ENCODE measurements at regions of chr12 and their contacts with region 1.

Region 1: DNA sequence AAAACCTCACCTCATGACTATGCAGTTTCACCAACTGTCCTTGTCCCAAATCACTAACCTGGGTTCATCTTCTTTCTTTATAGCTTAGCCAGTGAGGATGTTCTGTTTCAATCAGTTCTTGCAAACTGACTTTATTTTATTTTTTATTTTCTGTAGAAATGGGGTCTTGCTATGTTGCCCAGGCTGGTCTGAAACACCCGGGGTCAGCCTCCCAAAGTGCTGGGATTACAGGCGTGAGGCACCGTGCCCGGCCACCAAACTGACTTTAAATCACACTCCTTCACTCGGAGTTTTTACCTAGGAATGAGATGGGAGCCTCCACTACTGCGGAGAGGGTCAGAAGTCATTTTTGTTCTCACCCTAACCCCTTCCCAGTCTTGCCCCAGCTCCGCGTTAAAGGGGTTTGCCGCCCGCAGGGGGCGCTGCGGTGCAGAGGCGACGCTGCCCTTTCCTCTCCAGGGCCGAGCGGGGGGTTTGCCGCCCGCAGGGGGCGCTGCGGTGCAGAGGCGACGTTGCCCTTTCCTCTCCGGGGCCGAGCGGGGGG is 7.0 kb upstream of the B4GALNT3 start:
- DNase-seq: no peak

Region 2: GRCh38 chr12:503111-503761 is 50.5 kb after region 1 on chr12:
- intact Hi-C with region 1: loop called (anchors 2 kb)
- DNase-seq: peak; percentile 63